GM23248 (cell line): ENCODE measurements at regions of chr6 and their contacts with region 1.

Region 1: GRCh38 chr6:158704181-158704822 is 54.4 kb downstream of the SYTL3 start:
- DNase-seq: peak; percentile 80
- H3K4me3 ChIP-seq: peak overlapping the region; percentile 77
- H3K27ac ChIP-seq: no peak overlapping the region
- H3K4me1 ChIP-seq: peaks cover 12% of the 10 kb centered on the region
- H3K27me3 ChIP-seq: no peaks in the 10 kb centered on the region

Region 2: DNA sequence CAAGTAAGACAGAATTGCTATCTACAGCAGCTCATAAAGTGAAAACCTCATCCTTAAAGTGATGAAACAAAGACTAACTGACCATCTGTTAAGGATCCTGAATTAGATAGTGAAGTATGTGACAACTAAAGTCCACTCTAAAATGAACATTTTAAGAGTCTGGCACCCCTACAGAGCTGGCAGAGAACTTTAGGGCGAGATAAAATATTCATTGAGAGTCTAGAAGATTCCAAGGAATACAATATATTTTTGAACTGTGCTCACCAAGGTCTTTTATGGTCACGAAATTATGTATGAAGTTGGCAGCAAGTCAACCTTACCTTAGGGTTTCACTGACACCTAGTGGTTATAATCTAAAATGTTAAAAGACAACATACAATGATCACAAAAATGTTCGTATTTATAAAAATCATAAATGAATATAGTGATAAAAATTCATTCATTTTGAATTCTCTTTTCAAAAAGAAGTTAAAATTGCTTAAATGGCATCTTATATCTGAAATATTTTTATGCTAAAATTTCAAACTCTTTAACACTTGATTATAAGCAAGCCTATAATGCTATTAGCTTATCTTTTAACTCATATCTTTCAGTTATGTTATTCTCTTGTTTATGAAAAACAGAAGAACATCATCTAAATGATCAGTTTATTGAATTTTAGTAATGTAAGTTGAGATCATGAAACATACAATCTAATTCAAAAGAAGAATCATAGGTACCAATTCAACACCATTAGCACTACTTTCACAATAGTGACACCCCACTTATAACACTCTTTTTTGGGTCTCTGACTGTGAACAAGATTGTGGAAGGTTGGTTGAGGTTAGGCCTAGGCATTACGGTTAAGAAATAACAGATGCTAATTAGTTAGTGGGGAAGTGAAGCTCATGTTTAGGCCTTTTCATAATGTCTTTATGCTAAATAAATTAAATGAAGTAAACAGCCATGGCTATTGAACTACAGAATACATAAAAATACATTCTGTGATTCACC is 268.2 kb after region 1 on chr6:
- in situ Hi-C with region 1: loop called (anchors 25 kb)
- DNase-seq: peak; percentile 77
- H3K4me3 ChIP-seq: no peak overlapping the region
- H3K27ac ChIP-seq: no peak overlapping the region
- H3K4me1 ChIP-seq: no peaks in the 10 kb centered on the region
- H3K27me3 ChIP-seq: no peaks in the 10 kb centered on the region